Activated CD4-positive, alpha-beta T cell treated with anti-CD3 and anti-CD28 coated beads for 36 hours (primary cell): ENCODE measurements at regions of chr19 and their contacts with region 1.

Region 1: GRCh38 chr19:29873024-29873800 is 61.4 kb downstream of the CCNE1 start:
- DNase-seq: peak; percentile 81
- ATAC-seq: peak; percentile 88
- H3K4me3 Mint-ChIP-seq: peak overlapping the region; percentile 43
- H3K27ac Mint-ChIP-seq: no peak overlapping the region
- H3K4me1 Mint-ChIP-seq: peaks cover 2% of the 10 kb centered on the region
- H3K27me3 Mint-ChIP-seq: peaks cover 14% of the 10 kb centered on the region

Region 2: GRCh38 chr19:29680447-29680846 is 192.8 kb before region 1 on chr19:
- CTCF ChIA-PET with region 1: no interaction called
- POLR2A ChIA-PET with region 1: no interaction called
- intact Hi-C with region 1: no loop called
- DNase-seq: peak; percentile 92
- ATAC-seq: peak; percentile 91
- H3K4me3 Mint-ChIP-seq: peak overlapping the region; percentile 61
- H3K27ac Mint-ChIP-seq: peak overlapping the region; percentile 91
- H3K4me1 Mint-ChIP-seq: peaks cover 75% of the 10 kb centered on the region
- H3K27me3 Mint-ChIP-seq: no peaks in the 10 kb centered on the region

Region 3: DNA sequence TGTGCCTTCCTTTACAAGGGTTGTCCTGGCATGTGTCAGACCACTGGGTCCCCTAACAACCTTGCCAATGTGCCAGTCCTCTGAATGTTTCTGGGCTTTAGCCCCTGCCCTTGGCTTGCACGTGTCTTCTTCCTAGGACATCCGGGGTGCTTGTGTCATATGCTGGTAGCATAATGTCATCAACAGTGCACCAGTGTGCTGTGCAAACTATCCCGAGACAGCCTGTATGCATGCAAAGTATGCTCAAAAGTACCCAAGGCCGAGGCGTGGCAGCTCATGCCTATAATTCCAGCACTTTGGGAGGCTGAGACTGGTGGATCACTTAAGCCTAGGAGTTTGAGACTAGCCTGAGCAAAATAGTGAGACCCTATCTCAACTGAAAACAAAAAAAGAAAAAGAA is 137.4 kb before region 1 on chr19:
- CTCF ChIA-PET with region 1: interaction called, 57 read pairs
- POLR2A ChIA-PET with region 1: no interaction called
- intact Hi-C with region 1: loop called (anchors 1 kb)
- DNase-seq: no peak
- ATAC-seq: no peak
- H3K4me3 Mint-ChIP-seq: no peak overlapping the region
- H3K27ac Mint-ChIP-seq: no peak overlapping the region
- H3K4me1 Mint-ChIP-seq: no peaks in the 10 kb centered on the region
- H3K27me3 Mint-ChIP-seq: peaks cover 4% of the 10 kb centered on the region

Region 4: DNA sequence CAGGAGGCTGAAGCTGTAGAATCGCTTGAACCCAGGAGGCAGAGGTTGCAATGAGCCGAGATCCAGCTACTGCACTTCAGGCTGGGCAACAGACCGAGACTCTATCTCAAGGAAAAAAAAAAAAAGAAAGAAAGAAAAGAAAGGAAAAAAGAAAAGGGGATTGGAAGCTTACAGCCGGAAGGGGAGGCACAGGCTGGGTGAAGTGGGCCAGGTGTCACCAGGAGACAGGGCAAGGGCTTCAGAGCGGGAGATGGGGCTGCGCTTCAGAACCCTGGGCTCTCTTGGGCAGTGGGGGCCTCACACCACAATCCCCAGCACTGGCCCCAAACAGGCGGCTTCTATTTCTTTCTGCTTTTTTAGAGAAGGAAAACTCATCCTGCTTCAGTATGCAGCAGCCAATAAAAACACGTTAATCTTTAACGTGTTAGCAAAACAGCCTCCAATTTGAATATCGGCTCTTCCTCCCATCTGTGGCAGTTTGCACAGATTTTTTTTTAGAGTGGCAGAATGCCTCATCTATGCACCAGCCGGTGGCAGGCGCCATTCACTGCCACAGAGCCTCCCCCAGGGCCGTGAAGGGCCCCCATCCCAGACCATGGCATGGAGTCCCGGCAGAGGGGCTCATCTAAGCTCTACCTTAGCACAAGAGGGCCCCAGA is 111.5 kb before region 1 on chr19:
- CTCF ChIA-PET with region 1: interaction called, 28 read pairs
- POLR2A ChIA-PET with region 1: interaction called, 4 read pairs
- intact Hi-C with region 1: loop called (anchors 1 kb)
- DNase-seq: no peak
- ATAC-seq: no peak
- H3K4me3 Mint-ChIP-seq: no peak overlapping the region
- H3K27ac Mint-ChIP-seq: no peak overlapping the region
- H3K4me1 Mint-ChIP-seq: no peaks in the 10 kb centered on the region
- H3K27me3 Mint-ChIP-seq: peaks cover 1% of the 10 kb centered on the region

Region 5: DNA sequence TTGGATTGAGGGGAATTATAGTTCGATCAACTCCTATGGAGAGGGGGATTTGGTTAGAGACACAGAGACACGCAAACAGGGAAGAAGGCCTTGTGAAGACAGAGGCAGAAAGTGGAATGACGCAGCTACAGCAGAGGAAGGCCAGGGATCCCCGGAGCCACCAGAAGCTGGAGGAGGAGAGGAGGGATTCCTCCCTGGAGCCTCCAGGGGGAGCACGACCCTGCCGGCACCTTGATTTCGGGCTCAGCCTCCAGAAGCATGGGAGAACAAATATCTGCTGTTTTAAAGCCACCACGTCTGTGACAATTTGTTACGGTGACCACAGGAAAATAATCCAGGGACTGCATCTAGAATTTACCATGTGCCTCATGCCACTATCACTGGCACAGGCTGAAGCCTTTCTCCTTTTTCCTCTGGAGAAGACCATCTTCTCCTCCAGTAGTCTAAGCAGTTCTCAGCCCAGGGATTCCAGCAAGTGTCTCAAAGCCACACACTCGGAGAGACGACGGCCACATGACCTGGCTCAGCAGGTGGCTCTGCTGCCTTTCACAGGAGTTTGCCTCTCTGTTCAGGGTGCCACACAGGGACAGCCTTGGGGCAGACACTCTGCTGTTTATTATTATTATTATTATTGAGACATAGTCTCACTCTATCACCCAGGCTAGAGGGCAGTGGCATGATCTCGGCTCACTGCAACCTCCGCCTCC is 101.4 kb before region 1 on chr19:
- CTCF ChIA-PET with region 1: interaction called, 8 read pairs
- POLR2A ChIA-PET with region 1: no interaction called
- intact Hi-C with region 1: loop called in 1 of 2 experiments (anchors 1 kb)
- DNase-seq: peak; percentile 56
- ATAC-seq: peak; percentile 53
- H3K4me3 Mint-ChIP-seq: no peak overlapping the region
- H3K27ac Mint-ChIP-seq: no peak overlapping the region
- H3K4me1 Mint-ChIP-seq: no peaks in the 10 kb centered on the region
- H3K27me3 Mint-ChIP-seq: no peaks in the 10 kb centered on the region

Region 6: GRCh38 chr19:29785955-29786589 is 87.1 kb before region 1 on chr19:
- CTCF ChIA-PET with region 1: interaction called, 8 read pairs
- POLR2A ChIA-PET with region 1: no interaction called
- intact Hi-C with region 1: loop called in 1 of 2 experiments (anchors 1 kb)
- DNase-seq: peak; percentile 58
- ATAC-seq: peak; percentile 57
- H3K4me3 Mint-ChIP-seq: no peak overlapping the region
- H3K27ac Mint-ChIP-seq: no peak overlapping the region
- H3K4me1 Mint-ChIP-seq: no peaks in the 10 kb centered on the region
- H3K27me3 Mint-ChIP-seq: no peaks in the 10 kb centered on the region

Region 7: GRCh38 chr19:29811125-29812079 is 61.8 kb before region 1 on chr19 and contains the start of gene CCNE1:
- CTCF ChIA-PET with region 1: interaction called, 3 read pairs
- POLR2A ChIA-PET with region 1: no interaction called
- intact Hi-C with region 1: loop called in 1 of 2 experiments (anchors 1 kb)
- DNase-seq: peak; percentile 98
- ATAC-seq: peak; percentile 93
- H3K4me3 Mint-ChIP-seq: peak within 1 kb of the TSS; percentile 88
- H3K27ac Mint-ChIP-seq: peak within 1 kb of the TSS; percentile 94
- H3K4me1 Mint-ChIP-seq: peaks cover 15% of the 10 kb centered on the region
- H3K27me3 Mint-ChIP-seq: no peaks in the 10 kb centered on the region
- total RNA-seq, gene CCNE1: 29.4 to 30.4 TPM

Region 8: DNA sequence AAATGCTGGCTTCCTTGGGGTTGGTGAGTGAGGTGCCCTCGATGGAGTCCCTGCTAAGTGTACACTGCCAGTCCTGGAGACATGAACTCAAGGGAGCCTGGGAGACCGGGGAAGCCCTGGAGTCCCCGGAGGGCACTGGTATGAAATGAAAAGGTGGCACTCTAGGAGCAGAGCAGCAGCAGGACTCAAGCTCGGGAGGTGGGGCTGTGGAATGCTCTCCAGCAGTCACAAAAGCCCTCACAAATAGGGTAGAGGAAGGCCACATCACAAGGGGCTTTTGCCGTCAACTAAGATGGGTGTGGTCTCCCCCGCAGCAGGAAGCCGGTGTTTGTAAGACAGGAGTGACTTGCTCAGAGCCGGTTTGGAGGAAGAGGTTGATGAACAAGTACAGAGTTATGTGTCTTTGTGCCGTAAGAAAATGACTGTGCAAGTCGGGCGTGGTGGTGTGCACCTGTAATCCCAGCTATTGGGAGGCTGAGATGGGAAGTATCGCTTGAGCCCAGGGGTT is 42.1 kb before region 1 on chr19:
- CTCF ChIA-PET with region 1: no interaction called
- POLR2A ChIA-PET with region 1: no interaction called
- intact Hi-C with region 1: no loop called
- DNase-seq: peak; percentile 81
- ATAC-seq: peak; percentile 97
- H3K4me3 Mint-ChIP-seq: peak overlapping the region; percentile 56
- H3K27ac Mint-ChIP-seq: peak overlapping the region; percentile 96
- H3K4me1 Mint-ChIP-seq: peaks cover 50% of the 10 kb centered on the region
- H3K27me3 Mint-ChIP-seq: no peaks in the 10 kb centered on the region

Region 9: DNA sequence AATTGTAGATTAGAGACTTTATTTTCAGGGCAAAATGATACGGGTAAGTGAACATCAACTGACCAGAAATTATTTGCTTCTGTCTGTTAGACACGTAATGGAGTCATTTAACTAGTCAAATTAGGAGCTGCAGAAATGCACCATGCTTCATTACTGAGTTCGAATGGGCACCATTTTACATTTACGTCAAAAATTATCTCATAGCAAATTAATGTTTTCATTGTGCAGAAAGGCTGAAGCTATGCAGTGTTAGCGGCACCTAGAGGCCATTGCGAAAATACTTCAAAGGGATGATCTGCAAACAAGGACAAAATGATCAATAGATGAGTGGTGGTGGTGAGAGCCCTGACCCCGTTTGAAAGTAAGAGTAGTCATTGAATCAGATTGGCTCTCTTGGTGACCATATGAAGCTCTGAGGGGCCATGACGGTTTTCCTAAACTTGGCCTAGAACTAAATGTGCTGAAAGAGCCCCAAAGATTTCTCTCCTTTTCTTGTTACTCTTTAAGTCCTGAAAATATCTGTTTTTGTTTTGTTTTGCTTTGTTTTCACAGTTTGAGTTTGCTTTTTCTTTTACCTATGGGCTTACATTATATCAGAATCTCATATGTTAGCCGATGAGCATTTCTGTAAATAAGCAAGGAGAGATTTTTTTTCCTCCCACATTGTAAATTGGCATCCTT is 776.9 kb after region 1 on chr19:
- CTCF ChIA-PET with region 1: no interaction called
- POLR2A ChIA-PET with region 1: no interaction called
- intact Hi-C with region 1: loop called in 1 of 2 experiments (anchors 1 kb)
- DNase-seq: peak; percentile 68
- ATAC-seq: peak; percentile 58
- H3K4me3 Mint-ChIP-seq: no peak overlapping the region
- H3K27ac Mint-ChIP-seq: no peak overlapping the region
- H3K4me1 Mint-ChIP-seq: no peaks in the 10 kb centered on the region
- H3K27me3 Mint-ChIP-seq: peaks cover 25% of the 10 kb centered on the region